ENCODE measurements at regions of chr2 and their contacts with region 1.

Region 1: DNA sequence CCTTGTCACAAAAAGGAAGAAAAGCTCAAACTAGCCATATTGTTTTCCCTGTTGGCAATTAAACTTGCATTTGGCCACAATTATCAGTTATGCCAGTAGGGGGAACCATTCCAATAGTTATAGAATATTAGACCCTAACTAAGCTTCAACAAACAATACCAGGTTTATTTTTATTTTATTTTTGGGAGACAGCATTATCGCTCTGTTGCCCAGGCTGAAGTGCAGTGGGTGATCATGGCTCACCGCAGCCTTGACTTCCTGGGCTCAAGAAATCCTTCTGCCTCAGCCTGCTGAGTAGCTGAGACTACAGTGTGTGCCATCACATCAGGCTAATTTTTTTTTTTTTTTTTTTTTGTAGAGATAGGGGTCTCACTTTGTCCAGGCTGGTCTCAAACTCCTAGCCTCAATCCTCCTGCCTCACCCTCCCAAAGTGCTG is 102.1 kb downstream of the ATAD2B start:
- DNase-seq: peak in 7 of 9 donors; percentile 18 to 60 (median 50)
- ATAC-seq: peak; percentile 77
- H3K4me3 ChIP-seq: no peak overlapping the region
- H3K4me3 Mint-ChIP-seq: no peak overlapping the region
- H3K27ac ChIP-seq: no peak overlapping the region
- H3K27ac Mint-ChIP-seq: no peak overlapping the region
- H3K4me1 ChIP-seq: no peaks in the 10 kb centered on the region
- H3K4me1 Mint-ChIP-seq: peaks cover 0 to 4% (median 0%) of the 10 kb centered on the region in 7 donors
- H3K27me3 ChIP-seq: no peaks in the 10 kb centered on the region
- H3K27me3 Mint-ChIP-seq: no peaks in the 10 kb centered on the region

Region 2: DNA sequence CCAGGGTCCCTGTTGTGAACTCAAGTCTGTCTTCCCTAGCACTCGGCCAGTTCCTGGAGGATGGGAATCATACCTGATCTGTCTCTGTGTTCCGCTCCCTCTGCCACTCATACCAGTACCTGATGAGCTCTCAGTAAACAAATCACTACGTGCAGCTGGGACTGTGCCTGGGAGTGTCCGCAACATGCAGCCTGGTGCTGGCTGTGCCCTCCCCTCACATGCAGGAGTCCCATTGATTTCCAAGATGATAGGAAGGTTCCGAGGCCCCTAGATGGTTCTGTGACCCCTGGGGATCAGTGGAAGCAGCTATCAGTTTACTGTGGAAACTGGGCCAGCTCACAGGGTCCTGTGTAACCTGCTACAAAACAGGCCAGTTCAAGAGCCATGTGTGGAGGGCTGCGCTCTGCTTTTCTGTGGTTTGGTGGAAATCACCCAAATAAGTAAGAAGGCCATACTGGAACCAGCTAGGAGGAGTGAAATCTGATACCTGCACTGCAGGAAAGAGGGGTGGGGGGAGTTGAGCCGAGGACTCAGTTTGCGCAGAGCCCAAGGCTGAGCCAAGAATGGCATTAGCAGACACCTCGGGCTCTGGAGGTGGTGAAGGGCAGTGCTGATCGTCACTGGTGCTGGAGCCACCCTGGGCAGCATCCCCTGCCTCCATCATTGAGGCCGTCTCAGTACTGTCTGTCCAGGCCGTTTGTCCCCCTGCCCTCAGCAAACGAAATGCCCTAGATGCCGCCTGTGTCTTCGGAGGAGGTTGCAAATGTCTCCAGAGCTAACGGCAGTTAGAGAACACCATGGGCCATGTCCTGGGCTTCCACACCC is 346.5 kb before region 1 on chr2:
- CTCF ChIA-PET with region 1: no interaction called
- POLR2A ChIA-PET with region 1: no interaction called
- intact Hi-C with region 1: no loop called
- DNase-seq: no peak
- ATAC-seq: no peak
- H3K4me3 ChIP-seq: no peak overlapping the region
- H3K4me3 Mint-ChIP-seq: no peak overlapping the region
- H3K27ac ChIP-seq: no peak overlapping the region
- H3K27ac Mint-ChIP-seq: no peak overlapping the region
- H3K4me1 ChIP-seq: no peaks in the 10 kb centered on the region
- H3K4me1 Mint-ChIP-seq: peaks cover 0 to 10% (median 0%) of the 10 kb centered on the region in 7 donors
- H3K27me3 ChIP-seq: no peaks in the 10 kb centered on the region
- H3K27me3 Mint-ChIP-seq: peaks cover 0 to 17% (median 7%) of the 10 kb centered on the region in 5 donors

Region 3: GRCh38 chr2:23809150-23809549 is 15.6 kb before region 1 on chr2:
- CTCF ChIA-PET with region 1: interaction called, 13 read pairs
- POLR2A ChIA-PET with region 1: no interaction called
- intact Hi-C with region 1: no loop called
- DNase-seq: no peak
- ATAC-seq: no peak
- H3K4me3 ChIP-seq: no peak overlapping the region
- H3K4me3 Mint-ChIP-seq: no peak overlapping the region
- H3K27ac ChIP-seq: no peak overlapping the region
- H3K27ac Mint-ChIP-seq: peak overlapping the region in 1 of 9 donors; percentile 57
- H3K4me1 ChIP-seq: no peaks in the 10 kb centered on the region
- H3K4me1 Mint-ChIP-seq: peaks cover 0 to 6% (median 0%) of the 10 kb centered on the region in 7 donors
- H3K27me3 ChIP-seq: no peaks in the 10 kb centered on the region
- H3K27me3 Mint-ChIP-seq: no peaks in the 10 kb centered on the region

Region 4: GRCh38 chr2:23916727-23917405 is 92.1 kb after region 1 on chr2:
- CTCF ChIA-PET with region 1: no interaction called
- POLR2A ChIA-PET with region 1: interaction called, 11 read pairs
- intact Hi-C with region 1: no loop called
- DNase-seq: peak in 6 of 9 donors; percentile 8 to 24 (median 17)
- ATAC-seq: peak; percentile 61
- H3K4me3 ChIP-seq: no peak overlapping the region
- H3K4me3 Mint-ChIP-seq: peak overlapping the region in 9 of 10 donors; percentile 8 to 69 (median 38)
- H3K27ac ChIP-seq: peak overlapping the region; percentile 20
- H3K27ac Mint-ChIP-seq: peak overlapping the region in 7 of 9 donors; percentile 0 to 61 (median 48)
- H3K4me1 ChIP-seq: peaks cover 12 to 16% of the 10 kb centered on the region in 2 donors
- H3K4me1 Mint-ChIP-seq: peaks cover 42 to 84% (median 68%) of the 10 kb centered on the region in 7 donors
- H3K27me3 ChIP-seq: no peaks in the 10 kb centered on the region
- H3K27me3 Mint-ChIP-seq: no peaks in the 10 kb centered on the region

Region 5: GRCh38 chr2:24058564-24059271 is 233.9 kb after region 1 on chr2:
- CTCF ChIA-PET with region 1: interaction called, 6 read pairs
- POLR2A ChIA-PET with region 1: no interaction called
- intact Hi-C with region 1: loop called (anchors 1 kb)
- DNase-seq: no peak
- ATAC-seq: no peak
- H3K4me3 ChIP-seq: no peak overlapping the region
- H3K4me3 Mint-ChIP-seq: no peak overlapping the region
- H3K27ac ChIP-seq: no peak overlapping the region
- H3K27ac Mint-ChIP-seq: no peak overlapping the region
- H3K4me1 ChIP-seq: no peaks in the 10 kb centered on the region
- H3K4me1 Mint-ChIP-seq: peaks cover 0 to 11% (median 0%) of the 10 kb centered on the region in 7 donors
- H3K27me3 ChIP-seq: no peaks in the 10 kb centered on the region
- H3K27me3 Mint-ChIP-seq: peaks cover 0 to 13% (median 12%) of the 10 kb centered on the region in 5 donors

Region 6: GRCh38 chr2:24084386-24085361 is 259.9 kb after region 1 on chr2 and contains the start of gene TP53I3:
- CTCF ChIA-PET with region 1: interaction called, 59 read pairs
- POLR2A ChIA-PET with region 1: no interaction called
- intact Hi-C with region 1: loop called (anchors 1 kb)
- DNase-seq: peak; percentile 59 to 93 (median 80)
- ATAC-seq: peak; percentile 96
- H3K4me3 ChIP-seq: peak within 1 kb of the TSS; percentile 61
- H3K4me3 Mint-ChIP-seq: peak within 1 kb of the TSS; percentile 81 to 93 (median 88)
- H3K27ac ChIP-seq: peak within 1 kb of the TSS; percentile 28
- H3K27ac Mint-ChIP-seq: peak within 1 kb of the TSS in 8 of 9 donors; percentile 49 to 83 (median 65)
- H3K4me1 ChIP-seq: peaks cover 5 to 8% of the 10 kb centered on the region in 2 donors
- H3K4me1 Mint-ChIP-seq: peaks cover 10 to 21% (median 17%) of the 10 kb centered on the region in 7 donors
- H3K27me3 ChIP-seq: no peaks in the 10 kb centered on the region
- H3K27me3 Mint-ChIP-seq: no peaks in the 10 kb centered on the region
- total RNA-seq, gene TP53I3: 0.49 to 5.0 (median 1.7) TPM

Region 7: DNA sequence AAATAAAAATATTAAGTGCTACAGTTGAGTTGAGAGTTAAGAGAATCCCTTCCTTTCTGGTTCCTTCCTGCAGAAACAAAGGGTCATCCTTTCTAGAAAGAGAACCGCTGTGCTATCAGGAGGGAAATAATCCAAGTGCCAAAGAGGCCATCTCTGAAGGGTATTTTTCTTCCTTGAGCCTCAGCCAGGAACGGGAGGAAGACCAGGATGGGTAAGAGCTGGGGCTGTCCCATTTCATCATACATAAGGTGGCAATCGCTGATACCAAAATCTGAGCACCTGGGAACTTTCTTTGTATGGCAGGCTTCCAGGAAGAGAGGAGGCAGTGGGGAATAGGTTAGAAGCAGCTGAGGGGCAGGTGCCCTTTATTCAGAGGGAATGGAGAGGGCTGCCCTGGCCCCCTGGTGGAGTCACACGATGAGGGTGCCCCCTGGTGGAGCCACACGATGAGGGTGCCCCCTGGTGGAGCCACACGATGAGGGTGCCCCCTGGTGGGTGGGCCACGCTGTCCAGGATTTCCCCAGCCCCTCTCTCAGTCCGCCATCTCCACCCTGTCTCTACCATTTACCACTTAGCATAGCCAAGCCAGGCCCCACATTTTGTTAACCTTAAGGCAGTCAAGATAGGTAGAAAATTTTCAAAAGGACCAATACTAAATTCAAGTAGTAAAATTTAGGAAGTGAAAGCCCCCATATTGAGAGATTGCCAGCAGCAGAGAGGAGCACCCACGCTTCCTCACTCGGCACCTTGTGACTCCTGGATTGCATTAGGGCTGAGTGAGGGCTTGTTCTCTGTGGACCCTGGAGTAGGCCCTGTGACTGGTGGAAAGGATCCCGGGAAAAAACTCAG is 339.6 kb after region 1 on chr2:
- CTCF ChIA-PET with region 1: interaction called, 3 read pairs
- POLR2A ChIA-PET with region 1: no interaction called
- intact Hi-C with region 1: loop called (anchors 1 to 2 kb)
- DNase-seq: peak in 7 of 9 donors; percentile 7 to 43 (median 12)
- ATAC-seq: peak; percentile 90
- H3K4me3 ChIP-seq: no peak overlapping the region
- H3K4me3 Mint-ChIP-seq: no peak overlapping the region
- H3K27ac ChIP-seq: no peak overlapping the region
- H3K27ac Mint-ChIP-seq: no peak overlapping the region
- H3K4me1 ChIP-seq: no peaks in the 10 kb centered on the region
- H3K4me1 Mint-ChIP-seq: no peaks in the 10 kb centered on the region
- H3K27me3 ChIP-seq: no peaks in the 10 kb centered on the region
- H3K27me3 Mint-ChIP-seq: peaks cover 0 to 3% (median 0%) of the 10 kb centered on the region in 5 donors

Region 8: GRCh38 chr2:24228470-24228869 is 403.7 kb after region 1 on chr2:
- CTCF ChIA-PET with region 1: no interaction called
- POLR2A ChIA-PET with region 1: no interaction called
- intact Hi-C with region 1: loop called in 1 of 2 experiments (anchors 10 kb)
- DNase-seq: no peak
- ATAC-seq: no peak
- H3K4me3 ChIP-seq: no peak overlapping the region
- H3K4me3 Mint-ChIP-seq: no peak overlapping the region
- H3K27ac ChIP-seq: no peak overlapping the region
- H3K27ac Mint-ChIP-seq: no peak overlapping the region
- H3K4me1 ChIP-seq: no peaks in the 10 kb centered on the region
- H3K4me1 Mint-ChIP-seq: no peaks in the 10 kb centered on the region
- H3K27me3 ChIP-seq: no peaks in the 10 kb centered on the region
- H3K27me3 Mint-ChIP-seq: no peaks in the 10 kb centered on the region

Region 9: DNA sequence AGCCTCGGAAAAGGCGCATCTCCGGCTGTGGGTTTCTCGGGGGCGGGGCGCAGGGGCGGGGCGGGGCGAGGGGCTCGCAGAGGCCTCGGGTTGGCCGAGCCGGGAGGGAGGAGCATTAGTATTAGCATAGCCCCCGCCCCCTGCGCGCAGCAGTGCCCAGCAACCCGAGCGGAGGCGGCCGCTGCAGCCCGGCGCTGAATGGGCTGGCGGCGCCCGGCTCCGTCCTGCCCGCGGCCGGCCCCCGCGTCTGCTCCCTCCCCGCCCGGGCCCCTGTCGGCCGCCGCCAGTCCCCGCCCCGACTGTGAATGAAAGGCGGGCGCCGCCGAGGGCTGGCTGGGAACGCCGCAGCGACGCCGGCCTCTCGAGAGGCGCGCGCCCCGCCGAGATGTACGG is 1217.1 kb after region 1 on chr2 and contains the start of gene EFR3B:
- CTCF ChIA-PET with region 1: no interaction called
- POLR2A ChIA-PET with region 1: no interaction called
- intact Hi-C with region 1: no loop called
- DNase-seq: peak; percentile 77 to 88 (median 86)
- ATAC-seq: peak; percentile 99
- H3K4me3 ChIP-seq: peak within 1 kb of the TSS; percentile 73
- H3K4me3 Mint-ChIP-seq: peak within 1 kb of the TSS; percentile 79 to 91 (median 89)
- H3K27ac ChIP-seq: peak within 1 kb of the TSS; percentile 18
- H3K27ac Mint-ChIP-seq: peak within 1 kb of the TSS in 6 of 9 donors; percentile 8 to 88 (median 54)
- H3K4me1 ChIP-seq: peaks cover 13 to 17% of the 10 kb centered on the region in 2 donors
- H3K4me1 Mint-ChIP-seq: peaks cover 18 to 30% (median 20%) of the 10 kb centered on the region in 7 donors
- H3K27me3 ChIP-seq: peaks cover 7 to 8% of the 10 kb centered on the region in 2 donors
- H3K27me3 Mint-ChIP-seq: peaks cover 34 to 59% (median 37%) of the 10 kb centered on the region in 5 donors
- total RNA-seq, gene EFR3B: 0.05 to 0.08 (median 0.07) TPM in 3 of 5 experiments, not detected in the others

Measured in naive thymus-derived CD4-positive, alpha-beta T cell (primary cell).